Naive thymus-derived CD4-positive, alpha-beta T cell (primary cell): ENCODE measurements at regions of chr9 and their contacts with region 1.

Region 1: GRCh38 chr9:35553670-35554543 is 51.2 kb upstream of the TESK1 start:
- DNase-seq: peak in 7 of 9 donors; percentile 17 to 51 (median 41)
- ATAC-seq: peak; percentile 89
- H3K4me3 ChIP-seq: no peak overlapping the region
- H3K4me3 Mint-ChIP-seq: no peak overlapping the region
- H3K27ac ChIP-seq: no peak overlapping the region
- H3K27ac Mint-ChIP-seq: no peak overlapping the region
- H3K4me1 ChIP-seq: no peaks in the 10 kb centered on the region
- H3K4me1 Mint-ChIP-seq: peaks cover 0 to 3% (median 0%) of the 10 kb centered on the region in 7 donors
- H3K27me3 ChIP-seq: no peaks in the 10 kb centered on the region
- H3K27me3 Mint-ChIP-seq: peaks cover 0 to 2% (median 0%) of the 10 kb centered on the region in 5 donors

Region 2: GRCh38 chr9:34178520-34179212 is 1375.2 kb before region 1 on chr9 and contains the start of gene UBAP1:
- CTCF ChIA-PET with region 1: no interaction called
- POLR2A ChIA-PET with region 1: no interaction called
- intact Hi-C with region 1: no loop called
- DNase-seq: peak; percentile 83 to 97 (median 93)
- ATAC-seq: peak; percentile 99
- H3K4me3 ChIP-seq: peak within 1 kb of the TSS; percentile 93
- H3K4me3 Mint-ChIP-seq: peak within 1 kb of the TSS; percentile 93 to 100 (median 96)
- H3K27ac ChIP-seq: peak within 1 kb of the TSS; percentile 97
- H3K27ac Mint-ChIP-seq: peak within 1 kb of the TSS; percentile 94 to 99 (median 98)
- H3K4me1 ChIP-seq: peaks cover 0 to 8% of the 10 kb centered on the region in 2 donors
- H3K4me1 Mint-ChIP-seq: peaks cover 7 to 33% (median 21%) of the 10 kb centered on the region in 7 donors
- H3K27me3 ChIP-seq: no peaks in the 10 kb centered on the region
- H3K27me3 Mint-ChIP-seq: no peaks in the 10 kb centered on the region
- total RNA-seq, gene UBAP1: 31.1 to 39.9 (median 32.8) TPM

Region 3: GRCh38 chr9:34929506-34930102 is 624.3 kb before region 1 on chr9:
- CTCF ChIA-PET with region 1: no interaction called
- POLR2A ChIA-PET with region 1: no interaction called
- intact Hi-C with region 1: no loop called
- DNase-seq: peak in 3 of 9 donors; percentile 1 to 2 (median 2)
- ATAC-seq: peak; percentile 47
- H3K4me3 ChIP-seq: no peak overlapping the region
- H3K4me3 Mint-ChIP-seq: no peak overlapping the region
- H3K27ac ChIP-seq: no peak overlapping the region
- H3K27ac Mint-ChIP-seq: no peak overlapping the region
- H3K4me1 ChIP-seq: no peaks in the 10 kb centered on the region
- H3K4me1 Mint-ChIP-seq: peaks cover 0 to 1% (median 0%) of the 10 kb centered on the region in 7 donors
- H3K27me3 ChIP-seq: no peaks in the 10 kb centered on the region
- H3K27me3 Mint-ChIP-seq: peaks cover 9 to 41% (median 33%) of the 10 kb centered on the region in 5 donors

Region 4: GRCh38 chr9:35258676-35259474 is 295.0 kb before region 1 on chr9:
- CTCF ChIA-PET with region 1: no interaction called
- POLR2A ChIA-PET with region 1: no interaction called
- intact Hi-C with region 1: loop called (anchors 2 to 10 kb)
- DNase-seq: peak in 7 of 9 donors; percentile 12 to 51 (median 38)
- ATAC-seq: peak; percentile 58
- H3K4me3 ChIP-seq: no peak overlapping the region
- H3K4me3 Mint-ChIP-seq: no peak overlapping the region
- H3K27ac ChIP-seq: no peak overlapping the region
- H3K27ac Mint-ChIP-seq: no peak overlapping the region
- H3K4me1 ChIP-seq: no peaks in the 10 kb centered on the region
- H3K4me1 Mint-ChIP-seq: no peaks in the 10 kb centered on the region
- H3K27me3 ChIP-seq: no peaks in the 10 kb centered on the region
- H3K27me3 Mint-ChIP-seq: peaks cover 0 to 12% (median 6%) of the 10 kb centered on the region in 5 donors

Region 5: DNA sequence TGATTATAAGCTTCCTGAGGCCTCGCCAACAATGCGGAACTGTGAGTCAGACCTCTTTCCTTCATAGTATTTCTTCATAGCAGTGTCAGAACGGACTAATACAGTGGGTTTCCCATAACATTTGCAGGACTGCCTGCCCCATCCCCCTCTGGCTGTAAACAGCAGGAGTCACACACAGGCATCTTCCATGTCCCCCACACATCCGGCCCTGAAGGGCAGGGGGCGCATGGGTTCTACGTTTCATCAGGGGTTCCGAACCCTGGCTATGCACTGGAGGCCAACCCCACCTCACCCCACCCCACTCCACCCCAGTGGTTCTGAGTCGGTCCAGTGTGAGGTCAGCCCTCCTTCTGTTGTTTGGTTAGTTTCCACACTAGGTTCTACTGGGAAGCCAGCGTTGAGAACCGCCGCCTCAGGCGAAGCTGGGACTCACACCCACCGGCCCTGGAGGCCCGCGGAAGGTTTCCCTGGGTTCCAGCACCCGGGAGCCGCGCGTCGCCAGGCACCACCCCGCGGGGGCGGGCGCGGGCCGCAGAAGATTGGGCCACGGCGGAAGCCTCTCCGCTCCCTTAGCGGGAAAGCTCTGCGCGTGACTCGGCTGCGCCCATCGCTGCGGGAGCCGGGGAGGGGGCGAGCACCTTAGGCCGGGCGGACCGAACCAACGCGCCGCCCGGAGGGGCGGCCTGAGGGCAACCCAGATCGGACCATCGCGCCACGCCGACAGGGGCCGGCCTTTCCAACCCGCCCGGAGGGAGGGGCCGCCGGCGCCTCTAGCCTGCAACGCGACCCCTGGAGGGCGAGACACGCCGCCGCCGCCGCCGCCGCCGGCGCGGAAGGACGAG is 64.4 kb before region 1 on chr9 and contains the start of gene RUSC2:
- CTCF ChIA-PET with region 1: no interaction called
- POLR2A ChIA-PET with region 1: no interaction called
- intact Hi-C with region 1: loop called in 1 of 2 experiments (anchors 1 kb)
- DNase-seq: peak; percentile 12 to 75 (median 43)
- ATAC-seq: peak; percentile 84
- H3K4me3 ChIP-seq: peak within 1 kb of the TSS; percentile 54
- H3K4me3 Mint-ChIP-seq: peak within 1 kb of the TSS; percentile 83 to 96 (median 88)
- H3K27ac ChIP-seq: peak within 1 kb of the TSS; percentile 45
- H3K27ac Mint-ChIP-seq: peak within 1 kb of the TSS in 8 of 9 donors; percentile 22 to 78 (median 60)
- H3K4me1 ChIP-seq: peaks cover 0 to 4% of the 10 kb centered on the region in 2 donors
- H3K4me1 Mint-ChIP-seq: peaks cover 19 to 32% (median 28%) of the 10 kb centered on the region in 7 donors
- H3K27me3 ChIP-seq: no peaks in the 10 kb centered on the region
- H3K27me3 Mint-ChIP-seq: peaks cover 0 to 14% (median 0%) of the 10 kb centered on the region in 5 donors
- total RNA-seq, gene RUSC2: 3.1 to 8.3 (median 5.4) TPM

Region 6: DNA sequence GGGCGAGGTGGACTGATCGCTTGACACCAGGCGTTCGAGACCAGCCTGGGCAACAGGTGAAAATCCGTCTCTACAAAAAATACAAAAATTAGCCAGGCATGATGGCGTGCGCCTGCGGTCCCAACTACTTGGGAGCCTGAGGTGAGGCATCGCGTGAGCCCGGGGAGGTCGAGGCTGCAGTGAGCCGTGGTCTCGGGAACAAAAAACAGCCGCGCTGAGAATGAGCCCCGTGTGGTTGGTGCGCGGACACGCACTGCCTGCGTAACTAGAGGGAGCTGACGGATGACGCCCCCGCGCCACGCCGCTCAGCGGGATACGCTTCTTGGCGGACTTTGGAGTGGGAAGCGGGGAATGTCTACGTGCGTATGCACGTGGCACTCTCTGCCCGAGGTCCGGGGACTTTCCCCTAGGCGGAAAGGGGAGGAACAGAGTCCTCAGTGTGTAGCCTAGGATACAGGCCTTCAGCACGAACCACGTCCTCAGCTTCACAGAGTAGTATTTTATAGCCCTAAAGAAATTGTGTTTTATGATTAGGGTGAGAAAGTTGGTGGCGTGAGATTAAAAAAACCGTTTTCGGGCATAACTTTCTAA is 103.7 kb after region 1 on chr9 and contains the start of gene RMRP:
- CTCF ChIA-PET with region 1: no interaction called
- POLR2A ChIA-PET with region 1: no interaction called
- intact Hi-C with region 1: no loop called
- DNase-seq: peak; percentile 67 to 93 (median 91)
- ATAC-seq: peak; percentile 87
- H3K4me3 ChIP-seq: peak within 1 kb of the TSS; percentile 94
- H3K4me3 Mint-ChIP-seq: peak within 1 kb of the TSS; percentile 78 to 95 (median 90)
- H3K27ac ChIP-seq: peak within 1 kb of the TSS; percentile 99
- H3K27ac Mint-ChIP-seq: peak within 1 kb of the TSS; percentile 97 to 100 (median 100)
- H3K4me1 ChIP-seq: peaks cover 35 to 48% of the 10 kb centered on the region in 2 donors
- H3K4me1 Mint-ChIP-seq: peaks cover 42 to 78% (median 69%) of the 10 kb centered on the region in 7 donors
- H3K27me3 ChIP-seq: no peaks in the 10 kb centered on the region
- H3K27me3 Mint-ChIP-seq: peaks cover 0 to 6% (median 0%) of the 10 kb centered on the region in 5 donors
- total RNA-seq, gene RMRP: 5,750 to 11,273 (median 9,225) TPM

Region 7: GRCh38 chr9:36245906-36246305 is 692.0 kb after region 1 on chr9:
- CTCF ChIA-PET with region 1: no interaction called
- POLR2A ChIA-PET with region 1: no interaction called
- intact Hi-C with region 1: no loop called
- DNase-seq: no peak
- ATAC-seq: no peak
- H3K4me3 ChIP-seq: no peak overlapping the region
- H3K4me3 Mint-ChIP-seq: no peak overlapping the region
- H3K27ac ChIP-seq: no peak overlapping the region
- H3K27ac Mint-ChIP-seq: peak overlapping the region in 1 of 9 donors; percentile 36
- H3K4me1 ChIP-seq: no peaks in the 10 kb centered on the region
- H3K4me1 Mint-ChIP-seq: peaks cover 7 to 15% (median 11%) of the 10 kb centered on the region in 7 donors
- H3K27me3 ChIP-seq: no peaks in the 10 kb centered on the region
- H3K27me3 Mint-ChIP-seq: no peaks in the 10 kb centered on the region